ENCODE measurements at regions of chr16 and their contacts with region 1.

Region 1: DNA sequence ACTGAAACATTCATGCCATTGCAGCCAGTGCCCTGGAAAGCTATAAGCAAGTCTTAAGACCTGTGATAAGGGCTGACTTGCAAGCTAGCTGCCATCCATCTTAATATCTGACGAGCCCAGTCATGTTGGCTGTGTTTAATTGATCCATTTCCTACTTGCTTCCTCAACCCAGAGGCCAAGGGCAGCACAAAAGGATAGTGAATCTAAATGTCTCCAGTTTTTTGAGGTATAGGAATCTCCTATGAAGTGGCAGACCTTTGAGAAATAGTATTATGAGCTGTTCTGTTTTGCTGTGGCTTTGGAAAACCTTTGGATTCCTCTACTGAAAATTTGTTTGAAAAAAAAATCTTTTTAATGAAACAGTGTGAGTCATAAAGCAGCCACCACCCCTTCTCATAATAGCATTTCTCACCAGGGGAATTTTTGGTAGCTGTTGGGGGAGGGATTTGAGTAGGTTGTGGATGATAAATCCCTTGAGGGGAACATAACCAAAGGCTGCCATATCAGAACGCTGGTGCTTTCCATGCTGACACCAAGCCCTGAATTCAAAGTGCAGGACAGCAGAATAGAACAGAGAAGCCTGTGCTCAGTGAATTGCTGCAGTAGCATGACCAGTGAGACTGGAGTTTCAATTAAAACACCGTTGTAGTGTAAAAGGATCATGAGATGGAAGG is 12.9 kb downstream of the ZNRF1 start:
- DNase-seq: peak; percentile 77
- ATAC-seq: peak; percentile 92
- H3K4me3 Mint-ChIP-seq: peak overlapping the region; percentile 54
- H3K27ac Mint-ChIP-seq: peak overlapping the region; percentile 90
- H3K4me1 Mint-ChIP-seq: peaks cover 57% of the 10 kb centered on the region
- H3K27me3 Mint-ChIP-seq: no peaks in the 10 kb centered on the region

Region 2: GRCh38 chr16:74998481-74999218 is 13.1 kb before region 1 on chr16 and contains the start of gene ZNRF1:
- CTCF ChIA-PET with region 1: interaction called, 18 read pairs
- POLR2A ChIA-PET with region 1: interaction called, 5 read pairs
- intact Hi-C with region 1: loop called in 1 of 2 experiments (anchors 1 kb)
- DNase-seq: peak; percentile 91
- ATAC-seq: peak; percentile 80
- H3K4me3 Mint-ChIP-seq: peak within 1 kb of the TSS; percentile 87
- H3K27ac Mint-ChIP-seq: peak within 1 kb of the TSS; percentile 75
- H3K4me1 Mint-ChIP-seq: peaks cover 39% of the 10 kb centered on the region
- H3K27me3 Mint-ChIP-seq: peaks cover 4% of the 10 kb centered on the region
- total RNA-seq, gene ZNRF1: 35.2 to 42.9 TPM

Region 3: GRCh38 chr16:75023009-75023408 is 11.2 kb after region 1 on chr16:
- CTCF ChIA-PET with region 1: interaction called, 8 read pairs
- POLR2A ChIA-PET with region 1: interaction called, 10 read pairs
- intact Hi-C with region 1: loop called in 1 of 2 experiments (anchors 1 kb)
- DNase-seq: no peak
- ATAC-seq: peak; percentile 86
- H3K4me3 Mint-ChIP-seq: no peak overlapping the region
- H3K27ac Mint-ChIP-seq: peak overlapping the region; percentile 95
- H3K4me1 Mint-ChIP-seq: peaks cover 42% of the 10 kb centered on the region
- H3K27me3 Mint-ChIP-seq: no peaks in the 10 kb centered on the region

Region 4: DNA sequence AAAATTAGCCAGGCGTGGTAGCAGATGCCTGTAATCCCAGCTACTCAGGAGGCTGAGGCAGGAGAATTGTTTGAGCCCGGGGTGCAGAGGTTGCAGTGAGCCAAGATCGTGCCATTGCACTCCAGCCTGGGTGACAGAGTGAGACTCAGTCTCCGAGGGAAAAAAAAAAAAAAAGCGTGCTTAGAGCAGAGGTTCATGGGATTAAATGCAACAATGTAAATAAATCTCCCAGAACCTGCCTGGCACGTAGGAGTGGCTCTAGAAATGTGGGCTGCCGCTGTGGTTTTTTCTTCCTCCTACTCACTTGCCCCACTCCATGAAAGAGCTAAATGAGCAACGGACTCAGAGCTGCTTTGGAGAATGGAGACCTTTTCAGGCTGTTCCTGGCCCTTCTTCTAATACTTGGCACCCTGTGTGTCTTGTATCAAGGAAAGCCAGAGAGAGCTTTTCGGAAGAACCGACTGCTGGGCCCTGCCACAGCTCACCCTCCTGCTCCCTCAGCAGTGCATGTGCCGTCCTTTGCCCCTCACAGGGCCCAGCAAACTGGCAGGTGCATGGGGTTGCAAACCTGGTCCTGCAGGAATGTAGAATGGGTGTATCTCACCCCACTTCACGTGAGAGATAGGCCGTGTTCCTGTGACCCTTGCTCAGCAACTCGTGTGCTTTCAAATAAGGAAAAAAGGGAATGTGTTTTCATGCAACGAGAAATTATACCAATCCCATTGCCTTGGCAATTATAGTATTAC is 52.8 kb after region 1 on chr16:
- CTCF ChIA-PET with region 1: interaction called, 5 read pairs
- POLR2A ChIA-PET with region 1: no interaction called
- intact Hi-C with region 1: loop called (anchors 2 to 5 kb)
- DNase-seq: peak; percentile 62
- ATAC-seq: peak; percentile 58
- H3K4me3 Mint-ChIP-seq: peak overlapping the region; percentile 56
- H3K27ac Mint-ChIP-seq: peak overlapping the region; percentile 74
- H3K4me1 Mint-ChIP-seq: peaks cover 41% of the 10 kb centered on the region
- H3K27me3 Mint-ChIP-seq: no peaks in the 10 kb centered on the region

Region 5: GRCh38 chr16:75074920-75075687 is 63.3 kb after region 1 on chr16:
- CTCF ChIA-PET with region 1: interaction called, 5 read pairs
- POLR2A ChIA-PET with region 1: no interaction called
- intact Hi-C with region 1: loop called (anchors 1 kb)
- DNase-seq: peak; percentile 89
- ATAC-seq: peak; percentile 92
- H3K4me3 Mint-ChIP-seq: peak overlapping the region; percentile 54
- H3K27ac Mint-ChIP-seq: peak overlapping the region; percentile 97
- H3K4me1 Mint-ChIP-seq: peaks cover 62% of the 10 kb centered on the region
- H3K27me3 Mint-ChIP-seq: no peaks in the 10 kb centered on the region

Region 6: GRCh38 chr16:75099756-75100602 is 88.2 kb after region 1 on chr16:
- CTCF ChIA-PET with region 1: interaction called, 5 read pairs
- POLR2A ChIA-PET with region 1: interaction called, 3 read pairs
- intact Hi-C with region 1: loop called in 1 of 2 experiments (anchors 2 kb)
- DNase-seq: peak; percentile 68
- ATAC-seq: peak; percentile 45
- H3K4me3 Mint-ChIP-seq: peak overlapping the region; percentile 26
- H3K27ac Mint-ChIP-seq: peak overlapping the region; percentile 88
- H3K4me1 Mint-ChIP-seq: peaks cover 64% of the 10 kb centered on the region
- H3K27me3 Mint-ChIP-seq: no peaks in the 10 kb centered on the region

Region 7: DNA sequence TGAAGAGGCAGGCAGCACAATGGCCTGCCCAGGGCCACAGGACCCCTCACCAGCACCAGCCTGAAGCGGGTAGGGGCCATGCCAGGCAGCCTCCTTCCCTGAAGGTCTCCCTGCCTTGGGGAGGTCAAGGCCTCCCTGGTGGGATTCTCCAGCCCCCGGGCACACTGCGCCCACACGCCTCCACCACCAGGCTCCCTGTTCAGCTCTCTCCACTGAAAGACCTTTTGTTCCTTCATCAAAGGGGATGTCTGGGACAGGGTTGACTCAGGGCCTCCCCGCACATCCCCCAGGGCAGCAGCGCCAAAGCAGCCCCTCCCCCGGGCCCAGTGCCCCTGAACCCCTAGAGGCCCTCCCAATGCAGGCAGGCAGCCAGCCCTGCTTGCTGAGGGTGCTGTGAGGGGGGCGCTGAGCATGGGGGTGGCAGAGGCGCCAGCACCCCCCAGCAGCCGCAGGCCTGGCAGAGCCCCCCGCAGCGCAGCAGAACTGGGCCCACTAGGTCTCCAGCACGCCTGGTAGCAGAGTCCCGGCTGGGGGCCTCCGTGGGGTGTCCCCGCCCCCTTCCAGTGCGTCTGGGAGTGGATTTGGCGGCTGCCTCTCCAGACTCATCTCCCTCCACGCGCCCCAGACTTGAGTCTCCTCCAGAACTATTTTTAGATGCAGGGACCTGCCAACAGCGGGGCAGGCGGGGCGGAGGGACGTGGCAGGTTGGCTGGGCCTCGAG is 226.5 kb after region 1 on chr16:
- CTCF ChIA-PET with region 1: no interaction called
- POLR2A ChIA-PET with region 1: no interaction called
- intact Hi-C with region 1: no loop called
- DNase-seq: no peak
- ATAC-seq: no peak
- H3K4me3 Mint-ChIP-seq: no peak overlapping the region
- H3K27ac Mint-ChIP-seq: no peak overlapping the region
- H3K4me1 Mint-ChIP-seq: peaks cover 2% of the 10 kb centered on the region
- H3K27me3 Mint-ChIP-seq: no peaks in the 10 kb centered on the region

Region 8: GRCh38 chr16:75372236-75372856 is 360.6 kb after region 1 on chr16:
- CTCF ChIA-PET with region 1: no interaction called
- POLR2A ChIA-PET with region 1: no interaction called
- intact Hi-C with region 1: no loop called
- DNase-seq: no peak
- ATAC-seq: no peak
- H3K4me3 Mint-ChIP-seq: no peak overlapping the region
- H3K27ac Mint-ChIP-seq: no peak overlapping the region
- H3K4me1 Mint-ChIP-seq: no peaks in the 10 kb centered on the region
- H3K27me3 Mint-ChIP-seq: peaks cover 3% of the 10 kb centered on the region